ENCODE measurements at regions of chr17 and their contacts with region 1.

Region 1: GRCh38 chr17:64081802-64082799 is 47.8 kb downstream of the ERN1 start:
- DNase-seq: peak; percentile 63 to 83 (median 75)
- H3K4me3 ChIP-seq: peak overlapping the region; percentile 4 to 21
- H3K4me3 Mint-ChIP-seq: peak overlapping the region in 5 of 8 donors; percentile 54 to 86 (median 80)
- H3K27ac ChIP-seq: peak overlapping the region; percentile 31
- H3K27ac Mint-ChIP-seq: peak overlapping the region in 1 of 7 donors; percentile 71
- H3K4me1 ChIP-seq: peaks cover 78% of the 10 kb centered on the region
- H3K4me1 Mint-ChIP-seq: peaks cover 18 to 34% (median 31%) of the 10 kb centered on the region in 4 donors
- H3K27me3 ChIP-seq: no peaks in the 10 kb centered on the region
- H3K27me3 Mint-ChIP-seq: no peaks in the 10 kb centered on the region

Region 2: GRCh38 chr17:63961355-63962212 is 120.5 kb before region 1 on chr17:
- CTCF ChIA-PET with region 1: no interaction called
- POLR2A ChIA-PET with region 1: no interaction called
- intact Hi-C with region 1: no loop called
- DNase-seq: peak in 3 of 5 donors; percentile 19 to 57 (median 25)
- H3K4me3 ChIP-seq: no peak overlapping the region
- H3K4me3 Mint-ChIP-seq: peak overlapping the region in 5 of 8 donors; percentile 17 to 70 (median 35)
- H3K27ac ChIP-seq: no peak overlapping the region
- H3K27ac Mint-ChIP-seq: peak overlapping the region in 2 of 7 donors; percentile 50 to 76
- H3K4me1 ChIP-seq: peaks cover 10% of the 10 kb centered on the region
- H3K4me1 Mint-ChIP-seq: peaks cover 4 to 27% (median 6%) of the 10 kb centered on the region in 4 donors
- H3K27me3 ChIP-seq: no peaks in the 10 kb centered on the region
- H3K27me3 Mint-ChIP-seq: no peaks in the 10 kb centered on the region

Region 3: DNA sequence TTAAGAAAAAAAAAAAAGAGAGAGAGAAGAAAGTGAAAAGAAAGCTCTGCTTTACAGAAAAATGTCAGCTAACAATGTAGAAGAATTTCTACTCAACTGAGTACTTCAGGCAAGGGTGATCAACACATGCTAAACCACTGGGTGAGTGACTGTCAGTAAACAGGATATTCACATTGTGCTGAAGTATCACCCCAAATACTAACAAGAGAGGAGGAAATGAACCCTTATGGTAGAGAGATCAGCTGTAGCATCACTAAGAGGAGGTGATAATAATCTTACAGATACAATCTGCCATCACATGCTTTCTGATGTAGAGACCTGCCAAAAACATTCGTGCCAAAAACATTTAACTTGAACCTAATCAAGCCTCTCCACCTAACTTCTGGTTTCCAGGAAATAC is 30.9 kb before region 1 on chr17:
- CTCF ChIA-PET with region 1: interaction called, 10 read pairs
- POLR2A ChIA-PET with region 1: interaction called, 42 read pairs
- intact Hi-C with region 1: loop called (anchors 1 kb)
- DNase-seq: peak; percentile 50 to 84 (median 73)
- H3K4me3 ChIP-seq: no peak overlapping the region
- H3K4me3 Mint-ChIP-seq: peak overlapping the region in 7 of 8 donors; percentile 37 to 78 (median 68)
- H3K27ac ChIP-seq: peak overlapping the region; percentile 52
- H3K27ac Mint-ChIP-seq: peak overlapping the region; percentile 69 to 96 (median 91)
- H3K4me1 ChIP-seq: peaks cover 56% of the 10 kb centered on the region
- H3K4me1 Mint-ChIP-seq: peaks cover 35 to 76% (median 54%) of the 10 kb centered on the region in 4 donors
- H3K27me3 ChIP-seq: no peaks in the 10 kb centered on the region
- H3K27me3 Mint-ChIP-seq: no peaks in the 10 kb centered on the region

Region 4: DNA sequence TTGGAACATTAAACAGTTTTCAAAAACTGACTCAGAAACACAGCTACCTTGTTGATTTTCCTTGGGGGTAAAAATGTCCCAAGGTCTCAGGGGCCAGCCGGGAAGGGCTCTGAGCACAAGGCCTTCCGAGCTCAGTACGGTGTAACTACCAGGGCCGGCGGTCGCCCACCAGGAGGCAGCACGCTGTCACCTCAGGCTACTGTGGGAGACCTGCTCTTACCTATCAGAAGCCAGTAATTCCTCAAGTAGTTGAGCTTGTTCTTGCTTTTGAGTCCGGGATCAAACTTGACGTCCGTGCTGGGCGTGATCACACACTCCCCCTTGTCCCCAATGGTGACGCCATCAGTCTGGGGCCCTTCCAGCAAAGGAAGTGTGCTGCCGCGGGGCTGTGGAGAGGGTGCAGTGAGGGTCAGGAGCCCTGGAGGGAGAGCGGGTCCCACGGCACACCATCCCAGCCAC is 18.3 kb before region 1 on chr17:
- CTCF ChIA-PET with region 1: interaction called, 5 read pairs
- POLR2A ChIA-PET with region 1: interaction called, 12 read pairs
- intact Hi-C with region 1: loop called (anchors 1 kb)
- DNase-seq: peak; percentile 39 to 74 (median 54)
- H3K4me3 ChIP-seq: no peak overlapping the region
- H3K4me3 Mint-ChIP-seq: peak overlapping the region; percentile 67 to 92 (median 88)
- H3K27ac ChIP-seq: peak overlapping the region; percentile 41
- H3K27ac Mint-ChIP-seq: peak overlapping the region; percentile 7 to 97 (median 92)
- H3K4me1 ChIP-seq: peaks cover 89% of the 10 kb centered on the region
- H3K4me1 Mint-ChIP-seq: peaks cover 48 to 100% (median 77%) of the 10 kb centered on the region in 4 donors
- H3K27me3 ChIP-seq: no peaks in the 10 kb centered on the region
- H3K27me3 Mint-ChIP-seq: no peaks in the 10 kb centered on the region

Region 5: GRCh38 chr17:64097196-64097936 is 15.3 kb after region 1 on chr17:
- CTCF ChIA-PET with region 1: interaction called, 4 read pairs
- POLR2A ChIA-PET with region 1: interaction called, 16 read pairs
- intact Hi-C with region 1: no loop called
- DNase-seq: no peak
- H3K4me3 ChIP-seq: no peak overlapping the region
- H3K4me3 Mint-ChIP-seq: peak overlapping the region in 1 of 8 donors; percentile 50
- H3K27ac ChIP-seq: no peak overlapping the region
- H3K27ac Mint-ChIP-seq: peak overlapping the region in 4 of 7 donors; percentile 6 to 71 (median 23)
- H3K4me1 ChIP-seq: peaks cover 56% of the 10 kb centered on the region
- H3K4me1 Mint-ChIP-seq: peaks cover 35 to 90% (median 68%) of the 10 kb centered on the region in 4 donors
- H3K27me3 ChIP-seq: no peaks in the 10 kb centered on the region
- H3K27me3 Mint-ChIP-seq: no peaks in the 10 kb centered on the region

Region 6: GRCh38 chr17:64117981-64118979 is 36.2 kb after region 1 on chr17:
- CTCF ChIA-PET with region 1: no interaction called
- POLR2A ChIA-PET with region 1: interaction called, 16 read pairs
- intact Hi-C with region 1: loop called (anchors 2 kb)
- DNase-seq: no peak
- H3K4me3 ChIP-seq: no peak overlapping the region
- H3K4me3 Mint-ChIP-seq: peak overlapping the region in 3 of 8 donors; percentile 21 to 63 (median 54)
- H3K27ac ChIP-seq: no peak overlapping the region
- H3K27ac Mint-ChIP-seq: peak overlapping the region in 5 of 7 donors; percentile 10 to 71 (median 50)
- H3K4me1 ChIP-seq: peaks cover 84% of the 10 kb centered on the region
- H3K4me1 Mint-ChIP-seq: peaks cover 52 to 91% (median 69%) of the 10 kb centered on the region in 4 donors
- H3K27me3 ChIP-seq: no peaks in the 10 kb centered on the region
- H3K27me3 Mint-ChIP-seq: no peaks in the 10 kb centered on the region